Heart left ventricle (tissue), 16 donors: ENCODE measurements at regions of chr15 and their contacts with region 1.

Region 1: GRCh38 chr15:92992720-92993119 is 92.6 kb downstream of the CHD2 start:
- DNase-seq: peak in 3 of 5 donors; percentile 16 to 38 (median 35)
- ATAC-seq: peak; percentile 70 to 90 (median 84)
- H3K4me3 ChIP-seq: no peak overlapping the region
- H3K27ac ChIP-seq: peak overlapping the region in 7 of 12 donors; percentile 1 to 59 (median 20)
- H3K4me1 ChIP-seq: peaks cover 0 to 10% (median 0%) of the 10 kb centered on the region in 12 donors
- H3K27me3 ChIP-seq: no peaks in the 10 kb centered on the region
- CTCF ChIP-seq: no peak
- POLR2A ChIP-seq: no peak

Region 2: GRCh38 chr15:92930776-92931175 is 61.9 kb before region 1 on chr15:
- intact Hi-C with region 1: loop called in 3 of 10 experiments (anchors 10 kb)
- DNase-seq: no peak
- ATAC-seq: peak in 3 of 4 donors; percentile 25 to 42 (median 27)
- H3K4me3 ChIP-seq: no peak overlapping the region
- H3K27ac ChIP-seq: peak overlapping the region in 1 of 12 donors; percentile 13
- H3K4me1 ChIP-seq: peaks cover 0 to 30% (median 8%) of the 10 kb centered on the region in 12 donors
- H3K27me3 ChIP-seq: no peaks in the 10 kb centered on the region
- CTCF ChIP-seq: no peak
- POLR2A ChIP-seq: no peak

Region 3: GRCh38 chr15:93040288-93041158 is 47.8 kb after region 1 on chr15:
- intact Hi-C with region 1: no loop called
- DNase-seq: peak in 1 of 5 donors; percentile 50
- ATAC-seq: no peak
- H3K4me3 ChIP-seq: no peak overlapping the region
- H3K27ac ChIP-seq: no peak overlapping the region
- H3K4me1 ChIP-seq: peaks cover 0 to 27% (median 3%) of the 10 kb centered on the region in 12 donors
- H3K27me3 ChIP-seq: no peaks in the 10 kb centered on the region
- CTCF ChIP-seq: no peak
- POLR2A ChIP-seq: no peak

Region 4: DNA sequence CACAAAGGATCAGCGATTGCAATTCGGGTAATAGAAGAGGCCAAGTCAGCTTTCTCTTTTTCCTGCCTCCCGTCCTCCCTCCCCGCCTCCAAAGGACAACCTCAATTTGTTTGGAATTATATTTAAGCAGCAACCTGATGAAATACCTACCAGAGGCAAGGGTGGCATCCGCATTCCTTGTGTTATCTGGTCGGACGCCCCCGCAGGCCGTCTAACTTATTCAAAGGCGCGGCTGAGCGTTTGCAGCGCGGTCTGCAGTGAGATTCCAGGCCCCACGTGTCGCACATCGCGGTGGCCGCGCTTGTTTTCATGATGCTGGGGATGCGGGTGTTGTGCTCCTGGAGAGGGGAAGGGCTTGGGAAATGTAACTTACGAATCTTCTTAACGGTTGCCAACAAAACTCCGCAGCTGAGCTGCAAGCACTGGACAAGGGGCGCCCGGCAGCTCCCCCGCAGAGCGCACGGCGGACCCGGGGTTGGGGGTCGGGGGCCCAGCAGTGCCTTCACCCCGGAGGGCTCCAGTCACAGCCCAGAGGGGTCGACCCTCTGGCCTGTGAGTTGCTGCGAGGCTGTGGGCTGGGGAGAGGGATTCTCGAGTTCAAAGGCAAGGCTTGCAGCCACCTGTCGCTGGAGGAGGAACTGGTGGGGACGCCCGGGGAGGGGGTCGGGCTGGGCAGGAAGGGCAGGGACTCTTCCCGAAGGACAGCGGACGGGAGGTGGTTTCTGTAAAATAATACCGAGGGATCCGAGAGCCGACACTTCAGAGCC is 116.8 kb after region 1 on chr15:
- intact Hi-C with region 1: no loop called
- DNase-seq: no peak
- ATAC-seq: no peak
- H3K4me3 ChIP-seq: no peak overlapping the region
- H3K27ac ChIP-seq: no peak overlapping the region
- H3K4me1 ChIP-seq: no peaks in the 10 kb centered on the region
- H3K27me3 ChIP-seq: peaks cover 5 to 41% (median 16%) of the 10 kb centered on the region in 9 donors
- CTCF ChIP-seq: no peak
- POLR2A ChIP-seq: no peak

Region 5: DNA sequence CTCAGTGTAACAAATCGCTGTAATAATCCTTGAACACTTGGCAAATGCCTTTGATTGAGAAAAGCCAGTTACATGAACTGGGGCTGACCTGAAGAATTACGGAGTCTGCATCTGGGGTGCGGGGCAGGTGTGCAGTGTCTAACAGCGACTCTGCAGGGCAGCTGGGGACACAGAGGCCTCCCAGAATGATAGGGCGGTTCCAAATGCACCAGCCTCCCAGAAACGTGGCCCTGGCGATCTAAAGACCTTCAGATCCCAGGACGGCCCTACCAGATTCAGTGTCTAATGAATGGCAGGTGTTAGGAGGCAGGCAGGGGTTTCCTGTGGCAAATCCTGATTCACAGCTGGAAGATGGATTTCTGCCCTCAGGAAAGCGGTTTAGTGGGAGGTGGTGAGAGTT is 196.8 kb after region 1 on chr15:
- intact Hi-C with region 1: no loop called
- DNase-seq: no peak
- ATAC-seq: peak in 2 of 4 donors; percentile 20 to 51
- H3K4me3 ChIP-seq: no peak overlapping the region
- H3K27ac ChIP-seq: no peak overlapping the region
- H3K4me1 ChIP-seq: no peaks in the 10 kb centered on the region
- H3K27me3 ChIP-seq: peaks cover 0 to 3% (median 0%) of the 10 kb centered on the region in 9 donors
- CTCF ChIP-seq: no peak
- POLR2A ChIP-seq: no peak